AG04450 (cell line): ENCODE measurements at regions of chr3 and their contacts with region 1.

Region 1: GRCh38 chr3:48151058-48151806 is 37.0 kb downstream of the CDC25A start:
- DNase-seq: peak; percentile 66
- H3K4me3 ChIP-seq: no peak overlapping the region
- H3K27ac ChIP-seq: no peak overlapping the region
- H3K27me3 ChIP-seq: no peaks in the 10 kb centered on the region
- CTCF ChIP-seq: peak; percentile 82

Region 2: DNA sequence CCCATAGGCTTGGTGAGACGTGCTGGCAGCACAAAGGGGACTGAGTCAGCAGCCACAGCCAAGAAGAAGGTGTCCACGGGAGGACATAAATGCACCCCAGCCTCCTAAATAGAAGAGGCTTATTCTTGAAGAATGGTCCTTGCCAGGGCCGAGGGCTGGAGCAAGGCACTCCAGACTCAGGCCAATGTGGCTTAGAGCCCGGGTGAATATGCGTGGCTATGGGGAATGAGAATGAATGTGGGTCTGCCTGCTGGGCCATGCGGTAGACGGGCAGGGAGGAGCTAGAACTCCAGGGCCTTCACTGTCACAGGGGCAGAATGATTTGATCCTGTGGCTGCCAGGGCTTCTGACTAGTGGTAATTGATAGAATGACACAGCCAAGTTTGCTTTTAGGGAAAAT is 314.2 kb before region 1 on chr3:
- CTCF ChIA-PET with region 1: interaction called, 34 read pairs
- POLR2A ChIA-PET with region 1: interaction called, 7 read pairs
- DNase-seq: no peak
- H3K4me3 ChIP-seq: no peak overlapping the region
- H3K27ac ChIP-seq: no peak overlapping the region
- H3K27me3 ChIP-seq: no peaks in the 10 kb centered on the region
- CTCF ChIP-seq: no peak

Region 3: GRCh38 chr3:48001991-48002390 is 149.2 kb before region 1 on chr3:
- CTCF ChIA-PET with region 1: interaction called, 12 read pairs
- POLR2A ChIA-PET with region 1: no interaction called
- DNase-seq: no peak
- H3K4me3 ChIP-seq: no peak overlapping the region
- H3K27ac ChIP-seq: no peak overlapping the region
- H3K27me3 ChIP-seq: no peaks in the 10 kb centered on the region
- CTCF ChIP-seq: no peak

Region 4: GRCh38 chr3:48013288-48013980 is 137.8 kb before region 1 on chr3:
- CTCF ChIA-PET with region 1: interaction called, 21 read pairs
- POLR2A ChIA-PET with region 1: no interaction called
- DNase-seq: peak; percentile 55
- H3K4me3 ChIP-seq: no peak overlapping the region
- H3K27ac ChIP-seq: peak overlapping the region; percentile 48
- H3K27me3 ChIP-seq: no peaks in the 10 kb centered on the region
- CTCF ChIP-seq: no peak

Region 5: GRCh38 chr3:48088749-48089466 is 62.3 kb before region 1 on chr3:
- CTCF ChIA-PET with region 1: interaction called, 9 read pairs
- POLR2A ChIA-PET with region 1: interaction called, 11 read pairs
- DNase-seq: peak; percentile 90
- H3K4me3 ChIP-seq: peak overlapping the region; percentile 88
- H3K27ac ChIP-seq: peak overlapping the region; percentile 98
- H3K27me3 ChIP-seq: no peaks in the 10 kb centered on the region
- CTCF ChIP-seq: no peak